ENCODE measurements at regions of chr2 and their contacts with region 1.

Region 1: GRCh38 chr2:182077451-182078142 is 91.9 kb downstream of the PPP1R1C start:
- DNase-seq: no peak
- ATAC-seq: peak; percentile 89
- H3K4me3 ChIP-seq: no peak overlapping the region
- H3K27ac ChIP-seq: no peak overlapping the region
- H3K4me1 ChIP-seq: no peaks in the 10 kb centered on the region
- H3K27me3 ChIP-seq: no peaks in the 10 kb centered on the region

Region 2: DNA sequence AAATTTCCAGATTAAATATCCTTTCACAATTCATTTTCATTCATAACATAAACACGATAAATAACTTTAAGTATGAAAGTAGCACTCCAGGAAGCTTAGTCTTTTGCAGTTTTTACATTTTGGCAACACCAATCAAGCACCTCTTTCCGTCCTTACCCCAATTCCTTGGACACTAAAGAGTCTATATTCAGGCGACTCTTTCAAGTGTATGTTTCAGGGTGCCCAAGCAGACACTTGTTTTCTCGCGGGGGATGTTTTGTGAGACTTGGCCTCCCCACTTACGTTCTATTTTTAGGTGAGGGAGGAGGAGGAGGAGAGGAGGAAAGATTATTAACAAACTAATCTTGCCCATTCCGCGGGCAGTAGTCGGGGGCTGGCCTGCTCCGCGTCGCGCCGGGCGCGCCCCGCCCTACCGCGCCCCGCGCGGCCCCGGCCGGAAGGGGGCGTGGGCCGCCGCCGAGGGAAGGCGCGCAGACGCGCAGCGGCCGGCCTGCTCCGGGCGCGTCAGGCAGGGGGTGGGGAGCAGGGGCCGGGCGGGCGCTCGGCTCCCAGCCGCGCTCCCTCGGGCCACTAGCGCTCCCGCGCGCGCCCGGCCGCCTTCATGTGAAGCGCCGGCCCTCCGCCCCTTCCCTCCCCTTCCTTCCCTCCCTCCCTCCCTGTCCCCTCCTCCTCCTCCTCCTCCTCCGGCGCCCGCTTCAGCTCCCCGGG is 186.2 kb before region 1 on chr2 and contains the start of gene ITPRID2:
- intact Hi-C with region 1: loop called in 1 of 2 experiments (anchors 5 kb)
- DNase-seq: peak; percentile 92 to 94
- ATAC-seq: peak; percentile 97
- H3K4me3 ChIP-seq: peak within 1 kb of the TSS; percentile 85 to 86
- H3K27ac ChIP-seq: peak within 1 kb of the TSS; percentile 93 to 95
- H3K4me1 ChIP-seq: peaks cover 0 to 7% of the 10 kb centered on the region in 2 donors
- H3K27me3 ChIP-seq: no peaks in the 10 kb centered on the region
- total RNA-seq, gene ITPRID2: 119 to 145 TPM

Region 3: DNA sequence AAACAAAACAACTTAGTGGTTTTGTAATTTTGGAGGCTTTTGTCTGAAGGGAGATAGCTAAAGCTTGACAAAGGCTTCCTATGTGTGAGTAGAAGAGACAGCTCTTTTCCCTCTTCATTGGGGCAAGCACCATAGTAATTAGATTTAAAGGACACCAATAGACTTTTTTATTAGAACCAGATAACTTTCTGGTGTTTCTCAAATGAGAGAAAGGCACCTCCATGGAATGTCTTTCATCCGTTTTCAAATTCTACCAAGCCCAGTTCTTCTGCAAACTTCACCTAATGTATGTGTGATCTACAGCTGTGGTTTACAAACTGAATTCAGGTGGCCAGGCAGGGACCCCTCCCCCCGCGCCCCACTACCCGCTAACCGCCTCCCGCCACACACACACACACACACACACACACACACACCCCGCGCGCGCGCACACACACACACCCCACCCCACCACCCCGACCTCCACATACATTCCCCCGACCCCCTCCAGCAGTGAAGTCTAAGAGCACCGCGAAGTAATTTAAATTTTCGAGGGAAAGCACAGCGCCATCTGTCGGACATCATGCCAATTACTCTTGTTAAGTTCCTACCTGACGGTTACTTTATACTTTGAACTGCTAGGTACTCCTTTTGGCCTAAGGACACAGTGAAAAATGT is 123.6 kb before region 1 on chr2:
- intact Hi-C with region 1: loop called in 1 of 2 experiments (anchors 10 kb)
- DNase-seq: peak; percentile 58 to 76
- ATAC-seq: peak; percentile 75
- H3K4me3 ChIP-seq: peak overlapping the region; percentile 16 to 29
- H3K27ac ChIP-seq: no peak overlapping the region
- H3K4me1 ChIP-seq: no peaks in the 10 kb centered on the region
- H3K27me3 ChIP-seq: no peaks in the 10 kb centered on the region